CD14-positive monocyte (primary cell): ENCODE measurements at regions of chr2 and their contacts with region 1.

Region 1: DNA sequence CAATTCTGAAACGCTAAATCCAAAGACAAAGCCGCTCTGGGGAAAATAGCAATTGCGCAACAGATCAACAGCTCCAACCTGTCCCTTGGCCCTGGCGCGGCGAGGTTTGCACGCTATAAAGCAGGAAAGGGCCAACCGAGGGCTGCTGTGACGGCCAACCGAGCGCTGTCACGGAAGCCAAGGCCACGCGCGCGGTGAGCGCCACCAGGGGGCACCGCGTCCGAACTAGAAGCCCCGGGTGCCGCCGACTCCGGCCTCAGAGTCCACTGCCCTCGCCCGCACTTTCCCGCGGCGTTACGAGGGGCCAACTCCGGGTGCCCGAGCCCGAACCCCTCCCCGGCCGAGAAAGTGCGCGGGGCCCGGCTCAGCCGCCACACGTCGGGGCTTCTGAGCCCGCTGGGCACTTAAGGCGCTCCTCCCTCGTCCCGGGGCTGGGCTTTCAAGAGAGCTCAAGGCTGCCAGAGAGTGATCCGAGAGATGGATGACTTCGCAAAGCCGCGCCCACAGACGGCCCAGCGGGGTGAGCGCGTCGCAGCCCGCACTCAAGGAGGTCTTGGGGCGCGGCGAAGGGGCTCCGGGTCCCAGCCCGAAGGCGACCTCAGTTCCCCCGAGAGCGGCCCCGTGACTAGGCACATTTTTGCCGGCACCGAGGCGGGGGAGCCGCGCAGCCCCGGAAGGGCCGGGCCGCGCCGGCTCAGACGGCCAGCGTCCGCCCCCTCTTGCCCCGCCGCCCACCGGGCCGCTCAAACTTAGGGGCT is 897 bp downstream of the NFE2L2 start:
- DNase-seq: peak; percentile 99
- H3K4me3 ChIP-seq: peak overlapping the region; percentile 66 to 93 (median 86)
- H3K4me3 Mint-ChIP-seq: peak overlapping the region; percentile 89 to 92
- H3K27ac ChIP-seq: peak overlapping the region; percentile 96 to 99
- H3K27ac Mint-ChIP-seq: peak overlapping the region; percentile 91 to 100 (median 94)
- H3K4me1 ChIP-seq: peaks cover 45 to 75% of the 10 kb centered on the region in 2 donors
- H3K4me1 Mint-ChIP-seq: peaks cover 63% of the 10 kb centered on the region
- H3K27me3 ChIP-seq: no peaks in the 10 kb centered on the region
- H3K27me3 Mint-ChIP-seq: no peaks in the 10 kb centered on the region
- CTCF ChIP-seq: peak; percentile 91

Region 2: DNA sequence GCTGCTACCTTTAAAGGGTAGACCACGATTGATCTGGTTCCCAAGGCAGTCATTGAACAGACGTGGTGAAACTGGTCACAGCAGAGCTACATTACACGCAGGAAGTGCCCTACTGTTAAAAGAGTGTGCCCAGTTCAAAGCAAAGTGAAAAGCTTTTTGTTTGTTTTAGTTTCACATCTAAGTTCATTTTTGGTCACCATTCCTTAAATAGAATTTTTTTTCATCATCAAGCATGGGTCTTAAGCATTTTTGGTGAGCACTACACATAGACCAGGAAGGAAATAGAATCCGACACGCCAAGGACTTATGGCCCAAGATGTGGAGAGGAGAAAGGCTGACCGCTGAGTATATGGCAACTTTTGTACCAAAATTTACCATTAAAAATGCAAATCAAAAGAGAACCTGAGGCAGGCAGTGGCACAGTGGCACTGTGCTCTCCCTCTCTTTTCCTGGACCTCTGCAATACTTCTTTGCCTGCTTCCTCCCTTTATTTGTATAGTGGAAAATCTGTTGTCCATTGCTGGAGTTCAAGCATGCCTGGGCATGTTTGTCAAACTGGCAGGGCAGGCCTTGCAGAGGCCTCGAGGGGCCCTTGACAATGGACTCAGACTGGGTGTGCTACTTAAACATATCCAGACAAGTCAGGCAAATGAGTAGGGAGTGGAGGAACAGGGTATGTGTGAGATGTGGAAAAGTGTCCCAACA is 93.7 kb before region 1 on chr2:
- intact Hi-C with region 1: loop called (anchors 2 to 10 kb)
- DNase-seq: peak in 1 of 3 donors; percentile 2
- H3K4me3 ChIP-seq: no peak overlapping the region
- H3K4me3 Mint-ChIP-seq: no peak overlapping the region
- H3K27ac ChIP-seq: no peak overlapping the region
- H3K27ac Mint-ChIP-seq: peak overlapping the region in 5 of 7 donors; percentile 14 to 75 (median 52)
- H3K4me1 ChIP-seq: peaks cover 24 to 32% of the 10 kb centered on the region in 2 donors
- H3K4me1 Mint-ChIP-seq: peaks cover 34% of the 10 kb centered on the region
- H3K27me3 ChIP-seq: no peaks in the 10 kb centered on the region
- H3K27me3 Mint-ChIP-seq: no peaks in the 10 kb centered on the region
- CTCF ChIP-seq: no peak

Region 3: GRCh38 chr2:177229448-177230242 is 34.0 kb before region 1 on chr2:
- intact Hi-C with region 1: loop called (anchors 5 kb)
- DNase-seq: no peak
- H3K4me3 ChIP-seq: no peak overlapping the region
- H3K4me3 Mint-ChIP-seq: no peak overlapping the region
- H3K27ac ChIP-seq: peak overlapping the region in 1 of 2 donors; percentile 48
- H3K27ac Mint-ChIP-seq: peak overlapping the region in 5 of 7 donors; percentile 26 to 76 (median 61)
- H3K4me1 ChIP-seq: peaks cover 13 to 16% of the 10 kb centered on the region in 2 donors
- H3K4me1 Mint-ChIP-seq: peaks cover 17% of the 10 kb centered on the region
- H3K27me3 ChIP-seq: no peaks in the 10 kb centered on the region
- H3K27me3 Mint-ChIP-seq: no peaks in the 10 kb centered on the region
- CTCF ChIP-seq: no peak

Region 4: DNA sequence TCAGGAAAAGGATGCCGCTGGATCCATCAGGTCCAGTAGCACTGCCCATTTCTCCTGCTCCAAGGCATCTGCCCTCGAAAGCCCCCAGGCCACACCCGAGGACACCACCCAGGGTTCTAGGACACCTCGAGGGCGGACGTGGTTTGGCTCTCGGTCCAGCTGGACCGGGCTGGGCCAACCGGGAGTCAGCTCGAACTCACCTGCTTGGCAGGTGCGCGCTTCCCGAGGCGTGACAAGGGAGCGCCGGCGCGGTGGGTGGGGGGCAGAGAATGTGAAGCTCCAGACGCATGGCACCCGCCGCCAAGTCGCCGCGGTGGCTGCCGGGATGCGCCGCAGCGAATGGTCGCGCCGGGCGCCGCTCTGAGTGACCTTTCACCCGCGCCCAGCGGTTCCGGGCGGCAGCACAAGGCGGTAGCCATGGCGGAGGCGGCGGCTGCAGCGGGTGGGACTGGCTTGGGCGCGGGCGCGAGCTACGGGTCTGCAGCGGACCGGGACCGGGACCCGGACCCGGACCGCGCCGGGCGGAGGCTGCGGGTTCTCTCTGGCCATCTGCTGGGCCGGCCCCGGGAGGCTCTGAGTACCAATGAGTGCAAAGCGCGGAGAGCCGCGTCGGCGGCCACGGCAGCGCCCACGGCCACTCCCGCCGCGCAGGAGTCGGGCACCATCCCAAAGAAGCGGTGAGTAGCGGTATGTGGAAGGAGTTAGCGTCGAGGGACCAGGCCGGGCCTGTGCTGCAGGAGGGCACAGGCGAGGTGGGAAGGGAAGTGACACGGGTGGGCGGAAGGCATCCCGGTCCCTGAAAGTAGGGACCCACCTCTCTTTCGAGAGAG is 129.0 kb after region 1 on chr2 and contains the start of gene AGPS:
- intact Hi-C with region 1: loop called in 1 of 2 experiments (anchors 10 kb)
- DNase-seq: peak; percentile 61 to 77 (median 67)
- H3K4me3 ChIP-seq: peak within 1 kb of the TSS; percentile 66 to 96 (median 85)
- H3K4me3 Mint-ChIP-seq: peak within 1 kb of the TSS; percentile 90 to 97
- H3K27ac ChIP-seq: peak within 1 kb of the TSS; percentile 46 to 92
- H3K27ac Mint-ChIP-seq: peak within 1 kb of the TSS; percentile 83 to 93 (median 87)
- H3K4me1 ChIP-seq: peaks cover 48 to 59% of the 10 kb centered on the region in 2 donors
- H3K4me1 Mint-ChIP-seq: peaks cover 66% of the 10 kb centered on the region
- H3K27me3 ChIP-seq: no peaks in the 10 kb centered on the region
- H3K27me3 Mint-ChIP-seq: peaks cover 0 to 1% (median 0%) of the 10 kb centered on the region in 3 donors
- CTCF ChIP-seq: peak; percentile 17
- polyA plus RNA-seq, gene AGPS: 7.1 to 26.9 (median 16.7) TPM